Posterior vena cava (tissue), 2 donors: ENCODE measurements at regions of chr4 and their contacts with region 1.

Region 1: GRCh38 chr4:24428850-24429249 is 155.5 kb downstream of the DHX15 start:
- DNase-seq: no peak

Region 2: GRCh38 chr4:22720091-22720490 is 1708.8 kb before region 1 on chr4:
- intact Hi-C with region 1: loop called in 1 of 2 experiments (anchors 5 kb)
- DNase-seq: no peak

Region 3: GRCh38 chr4:23920716-23921446 is 508.0 kb before region 1 on chr4:
- intact Hi-C with region 1: no loop called
- DNase-seq: no peak

Region 4: DNA sequence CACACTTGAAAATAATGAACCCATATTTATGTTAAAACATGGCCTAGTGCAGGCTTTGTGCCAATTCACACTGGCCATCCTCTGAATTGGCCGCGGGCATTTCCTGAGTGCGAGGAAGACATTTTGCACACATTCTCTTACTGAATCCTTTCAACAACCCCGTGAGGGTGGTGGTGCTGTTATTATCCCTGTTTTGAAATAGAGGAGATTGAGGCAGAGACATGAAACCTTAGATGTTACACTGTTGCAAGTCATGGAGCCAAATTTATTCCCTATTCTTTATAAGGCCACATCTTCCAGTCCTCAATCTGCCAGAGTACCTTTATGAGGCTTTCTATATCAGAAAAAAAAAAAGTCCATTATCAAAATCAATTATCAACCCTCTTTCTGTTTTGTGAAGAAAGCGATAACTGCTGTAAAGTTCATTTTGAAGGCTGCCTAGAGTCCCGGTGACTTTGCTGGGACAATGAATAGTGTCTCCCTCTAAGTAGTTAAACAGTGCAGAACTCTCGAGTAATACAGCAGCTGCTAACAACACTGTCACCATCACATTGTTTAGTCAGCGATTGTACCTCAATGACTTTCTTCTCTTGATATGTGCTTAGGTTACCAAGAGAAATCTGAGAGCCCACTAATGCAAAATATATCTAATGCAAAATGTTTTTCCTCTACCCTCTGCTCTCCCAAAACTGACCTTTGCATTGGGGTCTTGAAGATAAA is 296.7 kb before region 1 on chr4:
- intact Hi-C with region 1: no loop called
- DNase-seq: no peak

Region 5: DNA sequence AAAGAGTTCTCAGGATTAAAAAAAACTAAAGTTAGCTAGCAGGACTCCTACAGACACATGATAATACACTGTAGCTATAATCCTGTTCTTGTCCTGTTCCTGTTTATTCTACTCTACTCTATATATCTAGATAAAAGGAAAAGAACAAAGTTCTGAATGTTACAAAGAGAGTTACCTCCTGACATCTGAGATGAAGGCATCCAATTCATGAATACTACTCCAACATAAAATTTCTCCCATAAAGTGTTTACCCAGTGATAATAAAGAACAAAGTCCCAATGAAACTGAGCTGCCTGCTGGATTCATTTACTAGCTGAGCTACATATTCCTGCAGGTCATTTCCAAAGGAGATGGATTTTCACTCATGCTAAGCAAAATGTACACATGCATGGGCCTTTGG is 704.3 kb after region 1 on chr4:
- intact Hi-C with region 1: no loop called
- DNase-seq: no peak